ENCODE measurements at regions of chr1 and their contacts with region 1.

Region 1: DNA sequence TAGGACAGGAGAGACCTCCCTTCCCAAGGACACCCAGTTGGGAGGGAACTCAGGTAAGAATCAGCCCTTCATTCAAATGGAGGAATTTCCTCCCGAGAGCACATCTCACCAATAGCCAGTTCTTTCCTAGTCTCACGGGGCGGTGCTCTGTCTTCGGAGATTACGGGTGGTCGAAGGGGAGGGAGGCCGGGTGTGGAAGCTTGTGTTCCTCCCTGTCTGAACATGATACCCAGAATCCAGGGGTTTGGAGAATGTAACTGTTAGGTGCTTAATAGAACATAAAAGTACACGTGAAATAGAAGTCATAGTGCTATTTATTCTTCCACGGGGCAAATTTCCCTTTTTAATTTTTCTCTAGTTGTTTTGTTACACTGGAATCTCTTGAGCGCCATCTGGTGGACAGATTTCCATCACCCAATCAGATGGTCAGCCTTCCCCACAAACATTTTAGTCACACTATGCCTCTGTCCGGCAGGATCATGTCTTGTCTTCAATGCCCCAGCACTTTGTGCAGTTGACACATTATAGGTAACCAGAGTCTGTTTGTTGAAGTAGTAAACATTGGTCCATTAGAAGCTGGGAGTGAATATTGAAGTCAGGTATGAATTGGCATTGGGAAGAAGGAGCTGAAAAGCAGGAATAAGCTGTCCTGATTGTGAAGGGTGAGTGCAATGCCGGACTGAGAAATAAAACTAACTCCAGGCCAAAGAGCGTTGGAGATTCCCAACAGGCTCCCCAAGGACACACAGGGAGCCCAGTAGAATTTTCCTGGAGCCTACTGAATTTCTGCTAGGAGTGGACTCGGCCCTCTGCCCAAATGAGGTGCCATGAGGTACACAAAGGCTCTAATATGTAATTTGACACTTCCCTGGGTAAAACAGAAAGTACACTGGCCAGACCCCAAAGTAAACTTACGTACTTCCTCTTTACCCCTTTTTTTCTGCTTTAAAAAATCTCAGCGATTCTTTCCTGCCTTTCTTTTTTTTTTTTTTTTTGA is 27.6 kb upstream of the ZNF697 start:
- DNase-seq: peak; percentile 87
- H3K4me3 Mint-ChIP-seq: peak overlapping the region; percentile 49
- H3K27ac Mint-ChIP-seq: no peak overlapping the region
- H3K4me1 Mint-ChIP-seq: peaks cover 5% of the 10 kb centered on the region
- H3K27me3 Mint-ChIP-seq: peaks cover 6% of the 10 kb centered on the region

Region 2: GRCh38 chr1:119286587-119287181 is 389.0 kb before region 1 on chr1:
- CTCF ChIA-PET with region 1: interaction called, 3 read pairs
- intact Hi-C with region 1: loop called (anchors 2 kb)
- DNase-seq: peak; percentile 47
- H3K4me3 Mint-ChIP-seq: no peak overlapping the region
- H3K27ac Mint-ChIP-seq: no peak overlapping the region
- H3K4me1 Mint-ChIP-seq: no peaks in the 10 kb centered on the region
- H3K27me3 Mint-ChIP-seq: peaks cover 13% of the 10 kb centered on the region

Region 3: DNA sequence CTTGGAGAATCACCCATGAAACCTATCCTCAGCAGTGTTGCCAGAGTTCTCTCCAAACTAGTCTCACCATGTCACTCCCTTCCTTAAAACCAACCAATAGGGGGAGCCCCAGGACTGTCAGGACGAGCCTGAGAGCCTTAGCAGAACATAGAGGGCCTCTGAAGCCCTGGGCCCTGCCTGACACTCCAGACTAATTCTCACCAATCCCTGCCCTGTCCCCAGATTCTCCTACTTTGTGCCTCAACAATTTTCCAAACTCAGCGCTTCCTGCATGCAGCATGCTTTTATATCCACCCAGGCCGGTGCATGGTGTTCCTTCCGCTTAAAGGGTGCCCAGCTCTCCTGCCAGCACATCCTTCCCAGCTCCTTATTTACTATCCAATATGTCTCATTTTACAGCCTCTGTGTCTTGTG is 125.9 kb before region 1 on chr1:
- CTCF ChIA-PET with region 1: interaction called, 3 read pairs
- intact Hi-C with region 1: loop called (anchors 2 kb)
- DNase-seq: peak; percentile 52
- H3K4me3 Mint-ChIP-seq: no peak overlapping the region
- H3K27ac Mint-ChIP-seq: no peak overlapping the region
- H3K4me1 Mint-ChIP-seq: no peaks in the 10 kb centered on the region
- H3K27me3 Mint-ChIP-seq: peaks cover 2% of the 10 kb centered on the region

Region 4: GRCh38 chr1:119647734-119648619 is 27.7 kb before region 1 on chr1 and contains the start of gene ZNF697:
- CTCF ChIA-PET with region 1: interaction called, 17 read pairs
- intact Hi-C with region 1: no loop called
- DNase-seq: peak; percentile 79
- H3K4me3 Mint-ChIP-seq: peak within 1 kb of the TSS; percentile 73
- H3K27ac Mint-ChIP-seq: no peak within 1 kb of the TSS
- H3K4me1 Mint-ChIP-seq: peaks cover 20% of the 10 kb centered on the region
- H3K27me3 Mint-ChIP-seq: peaks cover 61% of the 10 kb centered on the region
- total RNA-seq, gene ZNF697: 0.41 to 0.59 TPM

Region 5: DNA sequence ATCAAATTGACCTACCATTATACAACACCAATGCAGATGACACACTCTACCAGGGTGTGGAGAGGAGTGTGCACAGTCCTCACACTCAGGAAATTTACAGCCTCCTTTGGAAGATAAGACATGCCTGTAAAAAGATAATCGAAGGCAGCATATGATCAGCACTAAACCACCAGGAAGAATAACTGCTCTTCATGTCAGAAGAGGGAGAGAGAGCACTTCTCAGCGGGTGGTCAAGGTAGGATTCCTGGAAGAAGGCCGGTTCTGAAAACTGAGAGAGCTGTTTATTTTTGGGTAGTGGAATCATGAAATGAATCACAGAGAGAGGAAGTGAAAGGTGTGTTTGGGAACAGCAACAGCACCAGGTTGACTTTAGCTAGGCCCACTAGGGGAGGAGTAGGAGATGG is 13.6 kb before region 1 on chr1:
- CTCF ChIA-PET with region 1: interaction called, 28 read pairs
- intact Hi-C with region 1: no loop called
- DNase-seq: no peak
- H3K4me3 Mint-ChIP-seq: no peak overlapping the region
- H3K27ac Mint-ChIP-seq: no peak overlapping the region
- H3K4me1 Mint-ChIP-seq: no peaks in the 10 kb centered on the region
- H3K27me3 Mint-ChIP-seq: peaks cover 5% of the 10 kb centered on the region